A673 (cell line): ENCODE measurements at regions of chr7 and their contacts with region 1.

Region 1: DNA sequence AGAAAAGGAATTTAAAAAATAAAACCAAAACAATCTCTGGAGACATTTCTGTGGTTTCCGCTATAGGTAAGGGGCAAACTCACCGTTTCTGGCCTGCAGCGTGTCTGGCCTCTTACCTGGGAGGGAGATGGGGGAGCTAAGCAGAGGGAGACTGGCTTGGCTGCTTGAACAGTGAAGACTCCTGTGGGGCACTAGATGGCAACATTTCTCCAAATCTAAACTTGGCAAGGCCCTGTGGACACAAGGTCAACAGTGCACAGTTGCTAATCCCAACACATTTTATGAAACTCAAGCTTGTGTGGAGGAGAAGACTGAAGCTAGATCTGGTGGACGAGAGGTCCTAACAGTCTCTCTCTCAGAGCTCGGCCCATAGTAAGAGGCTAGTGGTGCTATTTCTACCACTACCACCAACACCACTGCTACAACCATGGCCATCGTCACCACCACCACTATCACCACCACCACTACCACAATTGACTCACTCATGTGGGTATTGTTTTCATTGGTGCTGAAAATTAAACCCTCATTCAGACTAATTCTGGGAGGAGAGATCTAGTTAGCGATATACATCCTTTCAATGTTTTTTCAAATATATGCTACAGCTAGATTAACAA is 28.4 kb upstream of the CDHR3 start:
- DNase-seq: peak; percentile 46
- H3K4me3 ChIP-seq: no peak overlapping the region
- H3K27ac ChIP-seq: no peak overlapping the region
- H3K4me1 ChIP-seq: peaks cover 41% of the 10 kb centered on the region
- H3K27me3 ChIP-seq: no peaks in the 10 kb centered on the region
- CTCF ChIP-seq: peak; percentile 50

Region 2: GRCh38 chr7:106022193-106022821 is 87.6 kb after region 1 on chr7:
- CTCF ChIA-PET with region 1: no interaction called
- POLR2A ChIA-PET with region 1: no interaction called
- intact Hi-C with region 1: loop called (anchors 5 kb)
- DNase-seq: no peak
- H3K4me3 ChIP-seq: no peak overlapping the region
- H3K27ac ChIP-seq: peak overlapping the region; percentile 97
- H3K4me1 ChIP-seq: peaks cover 37% of the 10 kb centered on the region
- H3K27me3 ChIP-seq: no peaks in the 10 kb centered on the region
- CTCF ChIP-seq: no peak